A673 (cell line): ENCODE measurements at regions of chr6 and their contacts with region 1.

Region 1: GRCh38 chr6:2999618-3000557 is at the start of gene NQO2:
- DNase-seq: peak; percentile 88
- H3K4me3 ChIP-seq: peak within 1 kb of the TSS; percentile 99
- H3K27ac ChIP-seq: peak within 1 kb of the TSS; percentile 87
- H3K4me1 ChIP-seq: peaks cover 6% of the 10 kb centered on the region
- H3K27me3 ChIP-seq: no peaks in the 10 kb centered on the region
- CTCF ChIP-seq: no peak
- total RNA-seq, gene NQO2: 92.7 and 97.3 TPM in 2 replicates

Region 2: DNA sequence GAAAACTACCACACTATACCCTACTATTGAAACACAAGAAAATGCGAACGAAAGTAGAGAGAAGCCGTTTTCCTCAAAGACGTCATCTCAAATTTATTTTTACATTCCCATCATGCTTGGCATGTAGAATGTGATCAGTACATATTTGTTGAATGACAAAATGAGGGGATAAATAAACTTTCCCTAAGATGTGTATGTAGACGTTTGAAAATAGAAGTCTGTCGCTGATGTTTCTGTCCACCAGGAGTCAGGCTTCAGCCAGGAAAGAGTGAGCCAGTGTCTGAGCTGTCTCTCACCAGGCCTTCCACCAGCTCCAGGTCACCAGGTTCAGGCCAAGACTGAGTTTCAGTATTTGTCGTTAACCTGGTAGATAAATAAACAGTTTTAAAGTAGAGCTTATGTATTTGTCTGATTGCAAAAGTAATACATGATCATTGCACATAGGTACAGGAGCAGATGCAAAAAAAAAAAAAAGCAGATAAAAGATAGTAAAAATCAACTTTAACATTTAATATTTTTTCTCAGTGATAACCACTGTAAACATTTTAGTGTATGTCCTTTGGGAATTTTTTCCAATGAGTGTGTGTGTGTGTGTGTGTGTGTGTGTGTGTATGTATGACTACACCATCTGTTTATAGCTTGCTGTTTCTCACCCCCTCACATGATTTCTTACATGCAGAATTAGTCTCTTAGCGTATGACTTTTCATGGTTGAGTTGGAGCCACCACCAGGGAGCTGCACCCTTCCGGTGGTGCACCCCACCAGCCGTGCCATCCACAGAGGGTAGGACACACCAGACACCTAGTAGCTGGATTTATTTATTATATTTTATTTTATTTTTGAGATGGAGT is 208.5 kb before region 1 on chr6:
- CTCF ChIA-PET with region 1: no interaction called
- POLR2A ChIA-PET with region 1: interaction called, 10 read pairs
- intact Hi-C with region 1: no loop called
- DNase-seq: peak; percentile 78
- H3K4me3 ChIP-seq: no peak overlapping the region
- H3K27ac ChIP-seq: no peak overlapping the region
- H3K4me1 ChIP-seq: peaks cover 17% of the 10 kb centered on the region
- H3K27me3 ChIP-seq: no peaks in the 10 kb centered on the region
- CTCF ChIP-seq: peak; percentile 87

Region 3: DNA sequence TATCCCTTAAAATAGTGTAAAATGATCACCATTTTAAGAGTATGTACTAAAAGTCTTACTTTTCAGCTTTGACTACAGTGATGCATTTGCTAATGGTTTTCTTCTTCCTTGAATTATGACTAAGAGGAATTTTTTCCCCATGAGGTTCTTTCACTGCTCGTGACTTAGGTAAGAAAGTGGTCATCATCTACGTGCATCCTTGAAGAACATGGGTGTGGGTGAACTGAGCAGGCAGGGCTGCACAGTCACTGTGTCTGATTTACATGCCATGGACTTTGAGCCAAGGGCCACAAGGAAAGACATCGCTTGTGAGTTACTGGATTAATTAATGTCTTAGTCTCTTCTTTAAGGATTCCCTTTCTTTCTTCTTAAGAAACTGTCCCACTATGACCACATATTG is 33.1 kb after region 1 on chr6:
- CTCF ChIA-PET with region 1: no interaction called
- POLR2A ChIA-PET with region 1: no interaction called
- intact Hi-C with region 1: no loop called
- DNase-seq: no peak
- H3K4me3 ChIP-seq: no peak overlapping the region
- H3K27ac ChIP-seq: no peak overlapping the region
- H3K4me1 ChIP-seq: no peaks in the 10 kb centered on the region
- H3K27me3 ChIP-seq: no peaks in the 10 kb centered on the region
- CTCF ChIP-seq: no peak

Region 4: DNA sequence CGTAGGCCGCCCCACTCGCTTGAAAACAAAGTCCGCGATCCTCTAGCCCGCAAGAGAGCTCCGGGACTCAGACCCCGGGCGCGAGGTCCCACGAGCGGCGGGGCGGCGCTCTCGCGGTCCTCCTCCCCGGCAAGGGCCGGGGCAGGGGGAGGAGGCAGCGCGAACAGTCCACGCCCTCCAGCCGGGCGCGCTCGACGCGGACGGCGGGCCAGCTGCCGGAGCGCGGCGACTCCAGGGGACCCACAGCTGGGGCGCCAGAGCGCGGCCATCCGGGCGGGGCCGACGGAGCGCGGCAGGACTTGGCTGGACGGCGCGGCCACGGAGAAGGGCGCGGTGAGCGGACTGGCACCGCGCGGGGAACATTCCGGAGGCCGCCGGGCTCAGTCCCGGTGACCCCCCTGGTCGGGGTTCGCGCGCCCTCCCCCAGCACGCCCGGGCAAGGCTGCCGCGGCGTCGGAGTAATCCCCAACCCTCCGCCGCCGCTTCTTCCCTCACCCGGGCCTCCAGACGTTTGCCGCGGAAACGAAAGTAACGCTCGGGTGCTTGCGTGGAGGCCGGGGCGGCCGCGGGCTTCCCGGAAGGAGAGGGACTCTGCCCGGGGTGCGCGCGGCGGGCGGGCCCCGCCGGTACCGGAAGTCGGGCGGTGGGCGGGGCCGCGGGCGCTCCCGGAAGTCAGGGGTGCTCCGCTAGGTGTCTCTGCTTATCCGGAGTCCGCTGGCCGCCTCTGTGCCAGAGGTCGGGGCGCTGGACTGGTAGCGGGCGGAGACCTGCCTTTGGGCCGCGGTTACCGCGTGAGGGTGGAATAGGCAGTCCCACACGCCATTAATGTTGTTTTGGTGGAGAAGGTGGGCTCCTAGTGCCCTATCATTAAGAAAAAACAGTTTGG is 68.7 kb after region 1 on chr6 and contains the start of gene RIPK1:
- CTCF ChIA-PET with region 1: no interaction called
- POLR2A ChIA-PET with region 1: interaction called, 19 read pairs
- intact Hi-C with region 1: no loop called
- DNase-seq: peak; percentile 92
- H3K4me3 ChIP-seq: peak within 1 kb of the TSS; percentile 96
- H3K27ac ChIP-seq: peak within 1 kb of the TSS; percentile 99
- H3K4me1 ChIP-seq: peaks cover 11% of the 10 kb centered on the region
- H3K27me3 ChIP-seq: no peaks in the 10 kb centered on the region
- CTCF ChIP-seq: peak; percentile 41
- total RNA-seq, gene RIPK1: 11.4 and 15.0 TPM in 2 replicates

Region 5: GRCh38 chr6:3258720-3259490 is 259.0 kb after region 1 on chr6 and contains the start of gene PSMG4:
- CTCF ChIA-PET with region 1: interaction called, 9 read pairs
- POLR2A ChIA-PET with region 1: interaction called, 10 read pairs
- intact Hi-C with region 1: loop called (anchors 5 kb)
- DNase-seq: peak; percentile 92
- H3K4me3 ChIP-seq: peak within 1 kb of the TSS; percentile 84
- H3K27ac ChIP-seq: peak within 1 kb of the TSS; percentile 78
- H3K4me1 ChIP-seq: peaks cover 13% of the 10 kb centered on the region
- H3K27me3 ChIP-seq: no peaks in the 10 kb centered on the region
- CTCF ChIP-seq: no peak
- total RNA-seq, gene PSMG4: 34.4 and 40.8 TPM in 2 replicates

Region 6: GRCh38 chr6:3977875-3978711 is 978.2 kb after region 1 on chr6:
- CTCF ChIA-PET with region 1: interaction called, 10 read pairs
- POLR2A ChIA-PET with region 1: no interaction called
- intact Hi-C with region 1: no loop called
- DNase-seq: peak; percentile 93
- H3K4me3 ChIP-seq: no peak overlapping the region
- H3K27ac ChIP-seq: no peak overlapping the region
- H3K4me1 ChIP-seq: no peaks in the 10 kb centered on the region
- H3K27me3 ChIP-seq: no peaks in the 10 kb centered on the region
- CTCF ChIP-seq: peak; percentile 87